ENCODE measurements at regions of chr11 and their contacts with region 1.

Region 1: DNA sequence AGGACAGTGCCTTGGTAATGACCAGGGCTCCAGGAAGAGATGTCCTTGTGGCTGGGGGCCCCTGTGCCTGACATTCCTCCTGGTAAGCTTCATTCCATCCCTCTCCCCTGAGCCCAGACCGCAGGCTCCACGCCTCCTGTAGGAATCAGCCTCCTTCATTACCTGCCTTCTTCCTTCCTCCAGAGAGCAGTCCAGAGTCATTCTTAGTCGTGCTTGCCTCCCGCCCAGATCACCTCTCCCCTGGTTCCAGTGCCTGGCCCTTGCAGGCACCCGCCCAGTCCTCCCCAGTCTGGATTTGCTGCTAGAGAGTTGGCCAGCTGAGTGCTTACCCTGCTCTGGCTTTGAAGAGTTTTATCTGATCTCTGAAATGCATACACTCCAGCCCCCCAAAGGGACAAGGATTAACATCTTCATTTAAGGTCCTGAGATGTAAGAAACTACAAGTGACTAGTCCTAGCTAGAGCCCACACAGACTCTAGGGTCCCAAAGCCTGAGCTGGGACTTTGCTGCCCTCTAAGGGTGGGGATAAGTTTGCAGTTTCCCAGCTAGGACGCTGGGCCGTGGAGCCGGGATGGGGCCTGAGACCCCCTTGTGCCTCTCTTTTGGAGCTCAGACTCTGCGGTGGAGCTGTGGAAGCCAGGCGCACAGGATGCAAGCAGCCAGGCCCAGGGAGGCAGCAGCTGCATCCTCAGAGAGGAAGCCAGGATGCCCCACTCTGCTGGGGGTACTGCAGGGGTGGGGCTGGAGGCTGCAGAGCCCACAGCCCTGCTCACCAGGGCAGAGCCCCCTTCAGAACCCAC is 1.6 kb downstream of the NR1H3 start:
- DNase-seq: peak in 4 of 9 experiments; percentile 39 to 61 (median 48)
- ATAC-seq: peak; percentile 90
- H3K4me3 ChIP-seq: no peak overlapping the region
- H3K4me3 Mint-ChIP-seq: no peak overlapping the region
- H3K27ac ChIP-seq: no peak overlapping the region
- H3K27ac Mint-ChIP-seq: no peak overlapping the region
- H3K4me1 ChIP-seq: peaks cover 10% of the 10 kb centered on the region
- H3K4me1 Mint-ChIP-seq: peaks cover 10% of the 10 kb centered on the region
- H3K27me3 ChIP-seq: no peaks in the 10 kb centered on the region
- H3K27me3 Mint-ChIP-seq: no peaks in the 10 kb centered on the region
- CTCF ChIP-seq: peak; percentile 23

Region 2: DNA sequence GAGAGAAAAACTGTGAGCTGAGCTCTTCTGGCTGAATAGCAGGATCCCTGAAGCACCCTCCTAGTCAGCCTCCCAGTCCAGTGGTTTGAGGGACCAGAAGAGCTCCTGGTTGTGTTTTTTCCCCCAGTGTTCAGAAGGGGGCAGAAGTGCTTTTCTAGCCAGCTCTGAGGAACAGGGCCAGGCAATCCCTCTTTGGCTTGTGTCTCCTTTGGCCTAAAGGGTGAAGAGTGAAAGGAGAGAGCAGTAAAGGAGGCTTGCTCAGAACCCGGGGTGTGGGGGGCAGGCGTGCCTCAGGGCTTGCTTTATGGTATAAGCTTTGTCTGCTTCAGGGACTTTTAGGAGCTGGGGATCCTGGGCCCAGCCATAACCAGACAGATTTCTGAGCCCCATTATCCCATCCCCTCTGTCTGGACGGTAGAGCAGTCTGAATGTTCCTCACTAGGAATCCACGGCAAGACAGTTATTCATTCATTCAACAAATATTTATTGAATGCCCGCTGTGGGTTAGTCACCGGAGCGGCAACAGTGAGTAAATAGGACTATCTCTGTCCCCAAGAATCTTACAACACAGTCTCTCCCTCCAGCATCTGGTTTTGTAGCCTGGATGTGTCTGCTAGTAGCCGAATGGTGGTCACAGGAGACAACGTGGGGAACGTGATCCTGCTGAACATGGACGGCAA is 25.2 kb before region 1 on chr11:
- CTCF ChIA-PET with region 1: interaction called, 11 read pairs
- POLR2A ChIA-PET with region 1: interaction called, 3 read pairs
- intact Hi-C with region 1: no loop called
- DNase-seq: peak in 4 of 9 experiments; percentile 27 to 64 (median 37)
- ATAC-seq: peak; percentile 10
- H3K4me3 ChIP-seq: peak overlapping the region in 1 of 2 experiments; percentile 50
- H3K4me3 Mint-ChIP-seq: peak overlapping the region; percentile 74
- H3K27ac ChIP-seq: peak overlapping the region; percentile 65 to 72
- H3K27ac Mint-ChIP-seq: peak overlapping the region; percentile 94
- H3K4me1 ChIP-seq: peaks cover 24% of the 10 kb centered on the region
- H3K4me1 Mint-ChIP-seq: peaks cover 19% of the 10 kb centered on the region
- H3K27me3 ChIP-seq: no peaks in the 10 kb centered on the region
- H3K27me3 Mint-ChIP-seq: no peaks in the 10 kb centered on the region
- CTCF ChIP-seq: no peak